ENCODE measurements at regions of chr13 and their contacts with region 1.

Region 1: GRCh38 chr13:87444135-87444534 is 227.0 kb upstream of the SLITRK5 start:
- DNase-seq: peak; percentile 94
- H3K4me3 ChIP-seq: peak overlapping the region; percentile 24
- H3K27ac ChIP-seq: peak overlapping the region; percentile 80
- H3K4me1 ChIP-seq: peaks cover 42% of the 10 kb centered on the region
- CTCF ChIP-seq: no peak

Region 2: GRCh38 chr13:86510792-86511191 is 933.3 kb before region 1 on chr13:
- CTCF ChIA-PET with region 1: no interaction called
- POLR2A ChIA-PET with region 1: no interaction called
- intact Hi-C with region 1: no loop called
- DNase-seq: no peak
- H3K4me3 ChIP-seq: no peak overlapping the region
- H3K27ac ChIP-seq: no peak overlapping the region
- H3K4me1 ChIP-seq: no peaks in the 10 kb centered on the region
- CTCF ChIP-seq: no peak

Region 3: DNA sequence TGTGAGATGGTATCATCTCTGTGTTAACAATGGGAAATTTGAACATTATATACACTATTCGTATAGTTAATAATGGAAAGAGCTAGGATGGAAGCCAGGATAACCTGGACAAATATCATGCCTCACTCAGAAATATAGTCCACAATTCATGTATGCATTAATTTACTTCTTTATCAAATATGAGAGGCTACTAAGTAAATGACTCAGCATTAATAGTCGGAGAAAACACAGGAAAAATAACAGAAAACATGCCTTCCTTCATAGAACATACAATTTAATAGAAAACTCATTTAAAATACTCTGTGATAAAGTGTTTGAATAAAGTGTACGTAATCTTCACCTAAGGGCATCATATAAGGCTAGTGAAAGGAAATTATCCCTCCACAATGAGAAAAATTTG is 156.4 kb before region 1 on chr13:
- CTCF ChIA-PET with region 1: no interaction called
- POLR2A ChIA-PET with region 1: no interaction called
- intact Hi-C with region 1: loop called (anchors 5 kb)
- DNase-seq: no peak
- H3K4me3 ChIP-seq: no peak overlapping the region
- H3K27ac ChIP-seq: no peak overlapping the region
- H3K4me1 ChIP-seq: peaks cover 19% of the 10 kb centered on the region
- CTCF ChIP-seq: no peak

Region 4: GRCh38 chr13:87677496-87678371 is 233.6 kb after region 1 on chr13:
- CTCF ChIA-PET with region 1: no interaction called
- POLR2A ChIA-PET with region 1: interaction called, 7 read pairs
- intact Hi-C with region 1: loop called (anchors 1 kb)
- DNase-seq: peak; percentile 94
- H3K4me3 ChIP-seq: peak overlapping the region; percentile 69
- H3K27ac ChIP-seq: peak overlapping the region; percentile 88
- H3K4me1 ChIP-seq: peaks cover 75% of the 10 kb centered on the region
- CTCF ChIP-seq: no peak